Lower leg skin (tissue), 4 donors: ENCODE measurements at regions of chr3 and their contacts with region 1.

Region 1: GRCh38 chr3:11059090-11059798 is 66.7 kb downstream of the SLC6A1 start:
- DNase-seq: peak; percentile 39 to 82
- H3K4me3 ChIP-seq: no peak overlapping the region
- CTCF ChIP-seq: peak in 1 of 3 donors; percentile 10
- POLR2A ChIP-seq: no peak

Region 2: GRCh38 chr3:10764259-10765051 is 294.8 kb before region 1 on chr3:
- intact Hi-C with region 1: loop called (anchors 5 kb)
- DNase-seq: peak in 1 of 2 donors; percentile 70
- H3K4me3 ChIP-seq: no peak overlapping the region
- CTCF ChIP-seq: no peak
- POLR2A ChIP-seq: no peak